ENCODE measurements at regions of chr10 and their contacts with region 1.

Region 1: DNA sequence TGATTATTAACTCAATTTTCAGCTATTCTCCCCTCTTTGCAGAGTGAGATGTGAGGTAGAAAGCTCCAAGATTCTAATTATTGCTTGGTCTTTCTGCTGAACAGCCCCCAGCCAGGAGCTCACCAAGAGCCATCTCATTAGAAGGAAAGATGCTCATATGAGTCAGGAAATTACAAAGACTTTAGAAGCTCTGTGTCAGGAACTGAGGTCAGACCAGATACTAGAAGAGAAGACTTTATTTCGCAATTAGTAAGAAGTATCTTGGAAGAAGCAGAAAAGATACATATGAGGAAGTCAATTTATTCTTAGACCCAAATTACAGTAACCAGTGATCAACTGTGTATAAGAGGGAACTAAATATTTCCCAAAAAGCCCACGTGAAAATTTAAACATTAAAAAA is 626.9 kb downstream of the ZWINT start:
- DNase-seq: no peak
- H3K4me3 Mint-ChIP-seq: no peak overlapping the region
- H3K27ac Mint-ChIP-seq: no peak overlapping the region
- H3K4me1 Mint-ChIP-seq: no peaks in the 10 kb centered on the region
- H3K27me3 Mint-ChIP-seq: no peaks in the 10 kb centered on the region
- CTCF ChIP-seq: no peak

Region 2: GRCh38 chr10:55287346-55287745 is 446.8 kb before region 1 on chr10:
- CTCF ChIA-PET with region 1: interaction called, 4 read pairs
- intact Hi-C with region 1: loop called (anchors 10 kb)
- DNase-seq: no peak
- H3K4me3 Mint-ChIP-seq: no peak overlapping the region
- H3K27ac Mint-ChIP-seq: no peak overlapping the region
- H3K4me1 Mint-ChIP-seq: no peaks in the 10 kb centered on the region
- H3K27me3 Mint-ChIP-seq: no peaks in the 10 kb centered on the region
- CTCF ChIP-seq: no peak

Measured in Calu3 (cell line).